H1 (cell line): ENCODE measurements at regions of chr2 and their contacts with region 1.

Region 1: GRCh38 chr2:70498054-70498453 is 55.6 kb downstream of the TGFA start:
- DNase-seq: no peak
- H3K4me3 ChIP-seq: no peak overlapping the region
- H3K27ac ChIP-seq: no peak overlapping the region
- H3K4me1 ChIP-seq: peaks cover 0 to 2% (median 0%) of the 10 kb centered on the region in 4 experiments; a peak in 1 of 7 replicates
- H3K27me3 ChIP-seq: no peaks in the 10 kb centered on the region; a peak in 1 of 7 replicates
- CTCF ChIP-seq: peak in 2 of 3 experiments; percentile 49 to 55; a peak in 3 of 4 replicates
- EP300 ChIP-seq: no peak
- POLR2A ChIP-seq: no peak
- RAD21 ChIP-seq: peak; percentile 22 to 40; a peak in 3 of 4 replicates

Region 2: GRCh38 chr2:70396612-70397011 is 101.4 kb before region 1 on chr2:
- CTCF ChIA-PET with region 1: no interaction called
- POLR2A ChIA-PET with region 1: no interaction called
- DNase-seq: no peak
- H3K4me3 ChIP-seq: no peak overlapping the region
- H3K27ac ChIP-seq: no peak overlapping the region
- H3K4me1 ChIP-seq: no peaks in the 10 kb centered on the region
- H3K27me3 ChIP-seq: peaks cover 0 to 8% (median 2%) of the 10 kb centered on the region in 4 experiments; a peak in 3 of 7 replicates
- CTCF ChIP-seq: no peak
- EP300 ChIP-seq: no peak
- POLR2A ChIP-seq: no peak
- RAD21 ChIP-seq: no peak

Region 3: DNA sequence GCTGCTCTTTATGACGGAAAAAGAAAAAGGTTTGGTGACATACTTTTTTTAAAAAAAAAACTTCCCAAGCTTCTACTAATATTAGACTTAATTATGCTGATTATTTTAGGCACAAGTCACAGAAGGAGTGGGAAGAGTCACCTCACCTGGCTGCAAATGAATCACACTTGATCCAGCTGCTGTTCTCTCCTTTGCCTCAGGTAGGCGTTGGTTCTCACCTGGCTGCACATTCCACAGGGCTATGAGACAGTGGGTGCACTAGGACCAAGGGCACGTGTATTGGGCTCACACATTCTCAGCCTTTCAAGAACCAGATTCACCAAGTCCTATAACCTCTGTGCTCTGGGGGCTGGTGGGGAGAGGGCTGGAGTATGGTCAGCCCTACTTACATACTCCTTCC is 37.7 kb before region 1 on chr2:
- CTCF ChIA-PET with region 1: interaction called, 11 read pairs
- POLR2A ChIA-PET with region 1: no interaction called
- DNase-seq: no peak
- H3K4me3 ChIP-seq: no peak overlapping the region
- H3K27ac ChIP-seq: no peak overlapping the region
- H3K4me1 ChIP-seq: peaks cover 0 to 10% (median 4%) of the 10 kb centered on the region in 4 experiments; a peak in 5 of 7 replicates
- H3K27me3 ChIP-seq: no peaks in the 10 kb centered on the region
- CTCF ChIP-seq: peak; percentile 66 to 84 (median 75)
- EP300 ChIP-seq: no peak
- POLR2A ChIP-seq: no peak
- RAD21 ChIP-seq: peak; percentile 50 to 70

Region 4: GRCh38 chr2:70472221-70472890 is 25.7 kb before region 1 on chr2:
- CTCF ChIA-PET with region 1: interaction called, 15 read pairs
- POLR2A ChIA-PET with region 1: no interaction called
- DNase-seq: no peak
- H3K4me3 ChIP-seq: no peak overlapping the region
- H3K27ac ChIP-seq: no peak overlapping the region
- H3K4me1 ChIP-seq: peaks cover 0 to 4% (median 0%) of the 10 kb centered on the region in 4 experiments; a peak in 2 of 7 replicates
- H3K27me3 ChIP-seq: peaks cover 0 to 3% (median 0%) of the 10 kb centered on the region in 4 experiments; a peak in 1 of 7 replicates
- CTCF ChIP-seq: no peak
- EP300 ChIP-seq: no peak
- POLR2A ChIP-seq: no peak
- RAD21 ChIP-seq: no peak

Region 5: GRCh38 chr2:70482401-70482800 is 15.7 kb before region 1 on chr2:
- CTCF ChIA-PET with region 1: interaction called, 10 read pairs
- POLR2A ChIA-PET with region 1: no interaction called
- DNase-seq: no peak
- H3K4me3 ChIP-seq: no peak overlapping the region
- H3K27ac ChIP-seq: no peak overlapping the region
- H3K4me1 ChIP-seq: peaks cover 0 to 1% (median 0%) of the 10 kb centered on the region in 4 experiments; a peak in 3 of 7 replicates
- H3K27me3 ChIP-seq: no peaks in the 10 kb centered on the region; a peak in 2 of 7 replicates
- CTCF ChIP-seq: no peak
- EP300 ChIP-seq: no peak
- POLR2A ChIP-seq: no peak
- RAD21 ChIP-seq: no peak

Region 6: GRCh38 chr2:70514612-70515055 is 16.6 kb after region 1 on chr2:
- CTCF ChIA-PET with region 1: interaction called, 12 read pairs
- POLR2A ChIA-PET with region 1: interaction called, 3 read pairs
- DNase-seq: no peak
- H3K4me3 ChIP-seq: no peak overlapping the region
- H3K27ac ChIP-seq: no peak overlapping the region
- H3K4me1 ChIP-seq: peaks cover 0 to 2% (median 0%) of the 10 kb centered on the region in 4 experiments; a peak in 4 of 7 replicates
- H3K27me3 ChIP-seq: no peaks in the 10 kb centered on the region
- CTCF ChIP-seq: no peak
- EP300 ChIP-seq: no peak
- POLR2A ChIP-seq: no peak
- RAD21 ChIP-seq: no peak

Region 7: GRCh38 chr2:70698847-70699246 is 200.8 kb after region 1 on chr2:
- CTCF ChIA-PET with region 1: no interaction called
- POLR2A ChIA-PET with region 1: no interaction called
- DNase-seq: no peak
- H3K4me3 ChIP-seq: no peak overlapping the region
- H3K27ac ChIP-seq: no peak overlapping the region; the same call in 1 of the 2 replicates
- H3K4me1 ChIP-seq: no peaks in the 10 kb centered on the region
- H3K27me3 ChIP-seq: no peaks in the 10 kb centered on the region
- CTCF ChIP-seq: no peak
- EP300 ChIP-seq: no peak
- POLR2A ChIP-seq: no peak
- RAD21 ChIP-seq: no peak